WTC11 (cell line): ENCODE measurements at regions of chr19 and their contacts with region 1.

Region 1: GRCh38 chr19:48993175-48994034 is at the starts of genes GYS1 and RUVBL2:
- DNase-seq: peak; percentile 100
- ATAC-seq: peak; percentile 93
- H3K4me3 Mint-ChIP-seq: peak within 1 kb of the TSS; percentile 99
- H3K27ac Mint-ChIP-seq: peak within 1 kb of the TSS; percentile 97
- H3K4me1 Mint-ChIP-seq: peaks cover 31% of the 10 kb centered on the region
- H3K27me3 Mint-ChIP-seq: no peaks in the 10 kb centered on the region
- CTCF ChIP-seq: peak; percentile 85
- total RNA-seq, gene GYS1: 45.9 to 52.0 TPM (median 46.1 TPM) in 3 replicates
- total RNA-seq, gene RUVBL2: 168 to 178 TPM (median 169 TPM) in 3 replicates

Region 2: GRCh38 chr19:48806518-48806817 is 186.9 kb before region 1 on chr19:
- CTCF ChIA-PET with region 1: interaction called, 11 read pairs
- POLR2A ChIA-PET with region 1: no interaction called
- DNase-seq: peak; percentile 76
- ATAC-seq: no peak
- H3K4me3 Mint-ChIP-seq: peak overlapping the region; percentile 36; the same call in 1 of the 2 replicates
- H3K27ac Mint-ChIP-seq: peak overlapping the region; percentile 79; the same call in 1 of the 2 replicates
- H3K4me1 Mint-ChIP-seq: peaks cover 32% of the 10 kb centered on the region
- H3K27me3 Mint-ChIP-seq: peaks cover 17% of the 10 kb centered on the region
- CTCF ChIP-seq: no peak

Region 3: DNA sequence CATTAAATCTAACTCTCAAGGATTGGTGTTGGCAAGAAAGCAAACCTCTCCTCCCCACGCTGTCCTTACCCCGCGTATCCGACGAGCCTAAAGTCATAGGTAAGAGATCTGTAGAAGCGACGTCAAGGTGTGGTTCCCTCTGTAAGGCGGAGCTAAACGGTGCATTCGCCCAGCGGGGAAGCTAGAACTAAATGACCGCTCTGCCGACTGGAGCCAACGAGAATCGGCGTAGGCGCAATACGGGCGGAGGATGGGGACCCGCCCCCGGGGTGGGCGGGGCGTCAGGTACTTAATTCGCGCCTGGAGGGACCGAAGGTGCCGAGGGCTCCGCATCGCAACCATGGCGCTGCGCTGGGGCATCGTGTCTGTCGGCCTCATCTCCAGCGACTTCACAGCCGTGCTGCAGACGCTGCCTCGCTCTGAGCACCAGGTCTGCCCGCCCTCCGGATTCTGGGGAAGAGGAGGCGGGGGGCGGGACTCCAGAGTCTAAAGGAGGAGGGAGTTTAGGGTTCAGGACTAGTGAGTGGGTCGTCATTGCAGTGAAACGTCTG is 59.9 kb before region 1 on chr19 and contains the start of gene DHDH:
- CTCF ChIA-PET with region 1: interaction called, 20 read pairs
- POLR2A ChIA-PET with region 1: interaction called, 4 read pairs
- DNase-seq: peak; percentile 98
- ATAC-seq: peak; percentile 94
- H3K4me3 Mint-ChIP-seq: peak within 1 kb of the TSS; percentile 87
- H3K27ac Mint-ChIP-seq: peak within 1 kb of the TSS; percentile 34
- H3K4me1 Mint-ChIP-seq: peaks cover 17% of the 10 kb centered on the region
- H3K27me3 Mint-ChIP-seq: peaks cover 53% of the 10 kb centered on the region
- CTCF ChIP-seq: no peak
- total RNA-seq, gene DHDH: 3.0 to 3.4 TPM (median 3.1 TPM) in 3 replicates

Region 4: DNA sequence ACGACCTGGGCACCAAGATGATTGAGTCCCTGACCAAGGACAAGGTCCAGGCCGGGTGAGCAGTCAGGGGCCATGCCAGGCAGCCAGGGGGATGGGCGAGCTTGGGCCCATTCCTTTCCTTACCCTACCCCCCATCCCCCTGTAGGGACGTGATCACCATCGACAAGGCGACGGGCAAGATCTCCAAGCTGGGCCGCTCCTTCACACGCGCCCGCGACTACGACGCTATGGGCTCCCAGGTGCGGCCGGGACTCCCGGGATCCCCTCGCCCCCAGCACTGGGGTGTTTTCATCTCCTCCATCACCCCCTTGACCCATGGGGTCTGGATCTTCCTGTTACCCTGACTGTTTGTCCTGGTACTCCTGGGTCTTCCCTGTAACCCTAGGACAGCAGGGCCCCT is 16.4 kb after region 1 on chr19:
- CTCF ChIA-PET with region 1: interaction called, 13 read pairs
- POLR2A ChIA-PET with region 1: interaction called, 3 read pairs
- DNase-seq: no peak
- ATAC-seq: no peak
- H3K4me3 Mint-ChIP-seq: no peak overlapping the region
- H3K27ac Mint-ChIP-seq: no peak overlapping the region
- H3K4me1 Mint-ChIP-seq: no peaks in the 10 kb centered on the region
- H3K27me3 Mint-ChIP-seq: no peaks in the 10 kb centered on the region
- CTCF ChIP-seq: no peak

Region 5: DNA sequence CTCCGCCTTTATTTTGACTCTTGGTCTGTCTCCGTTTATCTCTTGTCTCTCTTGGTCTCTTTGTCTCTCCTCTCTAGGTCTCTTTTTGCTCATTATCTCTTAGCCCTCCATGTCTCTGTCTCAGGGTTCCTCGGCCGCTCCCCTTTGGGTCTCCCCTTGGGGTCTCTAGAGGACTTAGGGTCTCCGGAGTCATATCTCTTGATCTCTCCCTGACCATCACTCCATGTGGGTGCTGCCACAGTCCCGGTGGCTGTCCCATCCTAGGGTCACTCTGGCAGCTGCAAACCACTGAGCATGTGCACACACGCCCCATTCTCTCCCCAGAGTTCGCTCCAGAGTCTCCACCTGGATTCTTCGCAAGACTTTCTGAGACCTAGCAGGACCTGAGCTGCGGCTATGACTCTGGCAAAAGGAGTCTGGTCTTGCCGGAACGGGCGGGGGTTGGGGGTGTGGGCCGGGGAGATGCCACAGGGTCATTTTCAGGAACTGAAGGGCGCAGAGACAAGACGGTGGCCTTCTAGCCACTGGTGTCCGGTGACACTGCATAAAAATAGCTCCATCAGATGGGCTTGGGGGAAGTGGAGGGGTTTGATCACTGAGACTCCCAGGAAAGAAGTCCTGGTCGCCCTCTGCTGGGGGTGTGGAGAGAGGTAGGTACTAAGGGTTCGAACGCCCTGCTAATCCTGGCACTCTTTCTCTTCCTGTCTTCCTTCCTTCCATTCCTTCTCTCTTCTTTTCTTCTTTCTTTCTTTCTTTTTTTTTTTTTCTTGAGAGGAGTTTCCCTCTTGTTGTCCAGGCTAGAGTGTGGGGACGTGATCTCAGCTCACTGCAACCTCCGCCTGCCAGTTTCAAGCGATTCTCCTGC is 80.3 kb after region 1 on chr19:
- CTCF ChIA-PET with region 1: interaction called, 11 read pairs
- POLR2A ChIA-PET with region 1: no interaction called
- DNase-seq: peak; percentile 68
- ATAC-seq: peak; percentile 23; the same call in 1 of the 2 replicates
- H3K4me3 Mint-ChIP-seq: peak overlapping the region; percentile 68
- H3K27ac Mint-ChIP-seq: no peak overlapping the region
- H3K4me1 Mint-ChIP-seq: peaks cover 8% of the 10 kb centered on the region; the same call in 1 of the 2 replicates
- H3K27me3 Mint-ChIP-seq: peaks cover 78% of the 10 kb centered on the region
- CTCF ChIP-seq: no peak; the same call in 1 of the 2 replicates

Region 6: GRCh38 chr19:49200238-49200862 is 206.9 kb after region 1 on chr19:
- CTCF ChIA-PET with region 1: interaction called, 23 read pairs
- POLR2A ChIA-PET with region 1: no interaction called
- DNase-seq: peak; percentile 45
- ATAC-seq: peak; percentile 73
- H3K4me3 Mint-ChIP-seq: no peak overlapping the region
- H3K27ac Mint-ChIP-seq: no peak overlapping the region
- H3K4me1 Mint-ChIP-seq: no peaks in the 10 kb centered on the region
- H3K27me3 Mint-ChIP-seq: no peaks in the 10 kb centered on the region
- CTCF ChIP-seq: no peak